SK-N-SH (cell line): ENCODE measurements at regions of chr4 and their contacts with region 1.

Region 1: DNA sequence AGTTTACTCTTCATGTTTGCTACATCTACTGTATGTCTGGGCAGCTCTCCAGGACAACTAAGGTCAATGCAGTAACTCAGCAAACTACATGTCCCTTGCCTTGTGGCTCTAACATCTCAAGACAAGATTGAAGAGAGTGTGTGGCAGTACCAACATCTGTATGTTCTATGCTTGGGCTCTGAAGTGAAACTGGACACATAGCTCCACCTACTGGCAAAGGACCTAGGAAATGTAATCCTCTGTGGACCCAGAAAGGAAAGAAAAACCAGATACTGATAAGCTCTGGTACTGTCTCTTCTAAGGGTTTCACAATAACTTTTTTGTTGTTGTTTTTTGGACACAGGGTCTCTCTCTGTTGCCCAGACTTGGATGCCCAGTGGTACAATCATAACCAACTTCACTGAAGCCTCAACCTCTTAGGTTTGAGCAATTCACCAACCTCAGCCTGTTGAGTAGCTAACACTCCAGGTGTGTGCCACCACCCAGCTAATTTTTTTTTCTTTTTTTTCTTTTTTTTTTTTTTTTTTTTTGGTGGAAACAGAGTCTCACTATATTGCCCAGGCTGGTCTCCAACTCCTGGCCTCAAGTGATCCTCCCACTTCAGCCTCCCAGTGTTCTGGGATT is 64.1 kb downstream of the QDPR start:
- DNase-seq: peak; percentile 69
- H3K4me3 ChIP-seq: peak overlapping the region in 1 of 2 experiments; percentile 12; a peak in 1 of 4 replicates
- H3K27ac ChIP-seq: no peak overlapping the region
- H3K4me1 ChIP-seq: peaks cover 0 to 4% of the 10 kb centered on the region in 2 experiments; a peak in 1 of 4 replicates
- H3K27me3 ChIP-seq: no peaks in the 10 kb centered on the region
- CTCF ChIP-seq: peak; percentile 80
- EP300 ChIP-seq: no peak
- RAD21 ChIP-seq: peak; percentile 93

Region 2: GRCh38 chr4:16516796-16517439 is 930.9 kb before region 1 on chr4:
- CTCF ChIA-PET with region 1: interaction called, 10 read pairs
- POLR2A ChIA-PET with region 1: no interaction called
- DNase-seq: peak; percentile 63
- H3K4me3 ChIP-seq: 0 out of 4 replicates have a peak overlapping the region, but pooled peaks of 1 of the 2 experiments have one; percentile 19
- H3K27ac ChIP-seq: no peak overlapping the region
- H3K4me1 ChIP-seq: peaks cover 0 to 17% of the 10 kb centered on the region in 2 experiments; a peak in 3 of 4 replicates
- H3K27me3 ChIP-seq: no peaks in the 10 kb centered on the region
- CTCF ChIP-seq: peak; percentile 57
- EP300 ChIP-seq: peak in 1 of 2 experiments; percentile 63; a peak in 1 of 4 replicates
- RAD21 ChIP-seq: peak; percentile 87

Region 3: DNA sequence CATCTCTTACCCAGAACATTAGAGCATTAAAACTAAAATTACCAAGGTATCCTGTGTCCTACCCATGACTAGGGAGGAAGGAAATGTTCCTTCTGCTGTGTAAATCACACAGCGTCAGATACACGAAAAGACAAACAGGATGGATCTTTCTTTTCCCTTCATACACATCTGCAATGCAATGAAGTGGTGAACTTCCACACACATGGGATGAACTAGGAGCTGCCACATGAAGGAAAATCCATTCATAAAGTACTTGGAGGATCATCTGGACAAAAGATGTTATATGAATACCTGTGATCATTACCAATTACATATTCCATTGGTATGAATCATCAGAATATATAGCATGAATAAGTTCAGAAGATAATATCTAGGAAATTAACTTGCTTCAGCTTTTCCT is 595.6 kb before region 1 on chr4:
- CTCF ChIA-PET with region 1: no interaction called
- POLR2A ChIA-PET with region 1: no interaction called
- DNase-seq: no peak
- H3K4me3 ChIP-seq: no peak overlapping the region
- H3K27ac ChIP-seq: peak overlapping the region in 1 of 2 experiments; percentile 47; a peak in 2 of 4 replicates
- H3K4me1 ChIP-seq: peaks cover 0 to 8% of the 10 kb centered on the region in 2 experiments; a peak in 1 of 4 replicates
- H3K27me3 ChIP-seq: no peaks in the 10 kb centered on the region
- CTCF ChIP-seq: no peak
- EP300 ChIP-seq: no peak
- RAD21 ChIP-seq: no peak

Region 4: GRCh38 chr4:17336524-17336961 is 111.2 kb before region 1 on chr4:
- CTCF ChIA-PET with region 1: interaction called, 16 read pairs
- POLR2A ChIA-PET with region 1: no interaction called
- DNase-seq: no peak
- H3K4me3 ChIP-seq: no peak overlapping the region
- H3K27ac ChIP-seq: no peak overlapping the region
- H3K4me1 ChIP-seq: no peaks in the 10 kb centered on the region
- H3K27me3 ChIP-seq: no peaks in the 10 kb centered on the region; the same call in 1 of the 2 replicates
- CTCF ChIP-seq: no peak
- EP300 ChIP-seq: no peak
- RAD21 ChIP-seq: no peak

Region 5: GRCh38 chr4:17356926-17357325 is 90.9 kb before region 1 on chr4:
- CTCF ChIA-PET with region 1: interaction called, 21 read pairs
- POLR2A ChIA-PET with region 1: no interaction called
- DNase-seq: no peak
- H3K4me3 ChIP-seq: no peak overlapping the region
- H3K27ac ChIP-seq: no peak overlapping the region
- H3K4me1 ChIP-seq: no peaks in the 10 kb centered on the region; a peak in 1 of 4 replicates
- H3K27me3 ChIP-seq: no peaks in the 10 kb centered on the region; the same call in 1 of the 2 replicates
- CTCF ChIP-seq: no peak
- EP300 ChIP-seq: no peak
- RAD21 ChIP-seq: no peak

Region 6: GRCh38 chr4:17427991-17428390 is 19.8 kb before region 1 on chr4:
- CTCF ChIA-PET with region 1: interaction called, 12 read pairs
- POLR2A ChIA-PET with region 1: no interaction called
- DNase-seq: no peak
- H3K4me3 ChIP-seq: no peak overlapping the region
- H3K27ac ChIP-seq: no peak overlapping the region
- H3K4me1 ChIP-seq: no peaks in the 10 kb centered on the region
- H3K27me3 ChIP-seq: no peaks in the 10 kb centered on the region; the same call in 1 of the 2 replicates
- CTCF ChIP-seq: no peak
- EP300 ChIP-seq: no peak
- RAD21 ChIP-seq: no peak

Region 7: GRCh38 chr4:17468371-17469221 is 20.8 kb after region 1 on chr4:
- CTCF ChIA-PET with region 1: interaction called, 11 read pairs
- POLR2A ChIA-PET with region 1: no interaction called
- DNase-seq: peak; percentile 33
- H3K4me3 ChIP-seq: no peak overlapping the region
- H3K27ac ChIP-seq: no peak overlapping the region
- H3K4me1 ChIP-seq: no peaks in the 10 kb centered on the region; a peak in 1 of 4 replicates
- H3K27me3 ChIP-seq: no peaks in the 10 kb centered on the region
- CTCF ChIP-seq: peak; percentile 51
- EP300 ChIP-seq: no peak
- RAD21 ChIP-seq: peak; percentile 50

Region 8: DNA sequence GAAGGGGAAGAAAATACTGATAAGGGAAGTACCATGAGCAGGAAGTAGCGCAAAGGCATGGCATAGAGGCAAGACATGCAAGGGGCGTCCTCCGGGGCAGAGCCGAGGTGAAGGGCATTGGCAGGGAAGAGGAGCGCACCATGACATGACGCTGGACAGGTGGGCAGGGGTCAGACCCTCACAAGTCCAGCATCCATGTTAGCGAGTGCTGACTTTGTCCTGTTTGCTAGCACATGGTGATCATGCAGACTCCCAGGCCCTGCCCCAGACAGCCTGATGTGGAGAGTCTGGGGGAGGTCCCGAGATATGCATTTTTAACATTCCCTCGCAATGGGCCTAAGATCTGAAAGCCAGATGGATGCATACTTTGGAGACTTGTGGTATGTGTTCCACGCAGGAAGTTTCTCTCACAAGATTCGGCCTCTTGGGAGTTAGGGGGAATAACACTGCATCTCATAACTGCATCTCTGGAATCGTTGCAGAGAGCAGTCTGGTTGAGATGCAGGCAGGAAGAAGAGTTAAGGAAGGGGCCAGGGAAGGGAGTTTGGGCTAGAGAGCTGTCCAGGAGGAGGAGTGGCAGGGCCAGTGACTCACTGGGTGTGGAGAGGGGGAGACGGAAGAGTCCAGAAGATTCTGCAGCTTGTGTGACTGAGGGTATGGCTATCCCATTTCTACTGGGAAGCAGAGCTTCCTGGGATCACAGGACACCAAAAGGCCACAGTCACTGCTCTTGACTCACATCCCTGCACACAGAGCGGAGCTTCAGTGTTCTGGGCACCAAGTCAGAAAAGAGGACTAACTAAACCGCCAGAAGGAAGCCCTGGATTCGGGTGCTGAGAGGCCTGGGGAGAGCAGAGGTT is 273.9 kb after region 1 on chr4:
- CTCF ChIA-PET with region 1: no interaction called
- POLR2A ChIA-PET with region 1: no interaction called
- DNase-seq: no peak
- H3K4me3 ChIP-seq: no peak overlapping the region
- H3K27ac ChIP-seq: no peak overlapping the region
- H3K4me1 ChIP-seq: no peaks in the 10 kb centered on the region
- H3K27me3 ChIP-seq: no peaks in the 10 kb centered on the region
- CTCF ChIP-seq: no peak
- EP300 ChIP-seq: no peak
- RAD21 ChIP-seq: no peak